Calu3 (cell line): ENCODE measurements at regions of chr7 and their contacts with region 1.

Region 1: GRCh38 chr7:124101173-124101768 is 68.4 kb upstream of the TMEM229A start:
- DNase-seq: peak; percentile 43
- H3K4me3 Mint-ChIP-seq: no peak overlapping the region
- H3K27ac Mint-ChIP-seq: no peak overlapping the region
- H3K4me1 Mint-ChIP-seq: no peaks in the 10 kb centered on the region
- H3K27me3 Mint-ChIP-seq: peaks cover 58% of the 10 kb centered on the region
- CTCF ChIP-seq: peak; percentile 61

Region 2: DNA sequence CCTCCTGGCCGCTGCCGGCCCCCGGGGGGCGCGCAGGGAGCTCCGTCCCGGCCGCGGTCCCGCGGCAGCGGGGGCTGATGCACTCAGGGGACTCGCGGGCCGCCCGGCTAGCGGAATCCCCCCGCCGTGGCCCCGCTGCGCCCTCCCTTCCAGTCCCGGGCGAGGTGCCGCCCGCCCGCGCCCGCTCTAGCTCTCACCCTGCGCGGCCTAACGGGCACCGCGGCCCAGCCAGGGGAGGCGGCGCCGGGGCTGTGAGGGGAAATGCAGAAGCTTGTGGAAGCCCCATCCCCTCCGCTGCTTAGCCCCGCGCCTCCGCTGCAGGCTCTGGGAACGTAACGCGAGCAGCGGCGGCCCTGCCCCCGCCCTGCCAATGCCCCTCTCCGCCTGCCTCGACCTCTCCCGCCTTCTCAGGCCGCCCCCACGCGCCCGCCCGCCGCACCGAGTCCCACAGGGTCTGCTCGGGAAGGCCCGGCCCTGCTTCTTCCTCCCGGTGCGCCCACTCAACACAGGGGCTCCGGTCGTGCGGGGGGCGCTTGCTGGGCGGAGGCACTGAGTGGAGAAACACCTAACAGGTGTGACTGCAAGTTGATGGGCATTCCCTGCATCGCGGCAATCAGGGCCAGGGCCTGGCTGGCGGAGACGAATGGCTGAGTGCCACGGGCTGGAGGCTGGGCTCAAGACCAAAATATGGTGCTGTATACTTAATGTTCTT is 68.0 kb before region 1 on chr7:
- CTCF ChIA-PET with region 1: no interaction called
- intact Hi-C with region 1: no loop called
- DNase-seq: peak; percentile 21
- H3K4me3 Mint-ChIP-seq: peak overlapping the region; percentile 98
- H3K27ac Mint-ChIP-seq: no peak overlapping the region
- H3K4me1 Mint-ChIP-seq: peaks cover 21% of the 10 kb centered on the region
- H3K27me3 Mint-ChIP-seq: peaks cover 71% of the 10 kb centered on the region
- CTCF ChIP-seq: no peak

Region 3: DNA sequence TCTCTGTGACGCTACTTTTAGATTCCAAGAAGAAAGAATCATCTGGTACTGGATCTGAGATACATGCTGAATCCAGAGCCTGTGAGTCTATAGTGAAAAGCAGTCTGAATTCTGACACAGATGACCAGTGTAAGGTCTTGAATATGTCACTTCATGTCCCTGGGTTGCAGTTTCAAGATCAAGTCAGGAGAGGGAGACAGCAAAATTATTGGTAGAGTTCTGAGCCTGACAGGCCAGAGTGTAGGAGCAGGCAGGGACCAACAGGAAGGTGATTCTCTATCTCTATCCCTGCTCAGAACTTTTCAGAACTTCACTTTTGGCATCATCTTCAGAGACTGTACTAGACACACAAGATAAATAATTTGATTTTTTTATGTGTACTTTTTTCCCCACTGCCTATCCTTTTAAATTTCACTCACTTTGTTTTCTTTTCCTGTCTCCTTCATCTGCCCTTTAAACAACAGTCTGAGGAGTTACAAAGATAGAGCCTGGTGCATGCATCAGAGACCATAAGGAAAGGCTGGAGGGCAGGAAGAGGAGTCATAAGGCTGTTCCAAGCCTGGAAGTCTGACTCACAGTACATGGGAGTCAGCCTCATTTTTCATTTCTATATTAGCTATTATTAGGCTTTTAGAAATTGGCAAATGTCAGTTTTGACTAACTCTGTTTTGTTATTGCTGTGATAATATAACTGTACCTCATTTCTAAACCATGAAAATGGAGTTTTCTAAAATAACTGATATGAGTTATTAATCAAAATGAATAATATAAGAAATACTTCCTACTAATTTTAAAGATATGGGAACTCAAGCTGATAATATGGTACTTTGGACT is 51.8 kb after region 1 on chr7:
- CTCF ChIA-PET with region 1: no interaction called
- intact Hi-C with region 1: loop called (anchors 5 kb)
- DNase-seq: peak; percentile 41
- H3K4me3 Mint-ChIP-seq: no peak overlapping the region
- H3K27ac Mint-ChIP-seq: no peak overlapping the region
- H3K4me1 Mint-ChIP-seq: no peaks in the 10 kb centered on the region
- H3K27me3 Mint-ChIP-seq: no peaks in the 10 kb centered on the region
- CTCF ChIP-seq: peak; percentile 56